ENCODE measurements at regions of chr15 and their contacts with region 1.

Region 1: DNA sequence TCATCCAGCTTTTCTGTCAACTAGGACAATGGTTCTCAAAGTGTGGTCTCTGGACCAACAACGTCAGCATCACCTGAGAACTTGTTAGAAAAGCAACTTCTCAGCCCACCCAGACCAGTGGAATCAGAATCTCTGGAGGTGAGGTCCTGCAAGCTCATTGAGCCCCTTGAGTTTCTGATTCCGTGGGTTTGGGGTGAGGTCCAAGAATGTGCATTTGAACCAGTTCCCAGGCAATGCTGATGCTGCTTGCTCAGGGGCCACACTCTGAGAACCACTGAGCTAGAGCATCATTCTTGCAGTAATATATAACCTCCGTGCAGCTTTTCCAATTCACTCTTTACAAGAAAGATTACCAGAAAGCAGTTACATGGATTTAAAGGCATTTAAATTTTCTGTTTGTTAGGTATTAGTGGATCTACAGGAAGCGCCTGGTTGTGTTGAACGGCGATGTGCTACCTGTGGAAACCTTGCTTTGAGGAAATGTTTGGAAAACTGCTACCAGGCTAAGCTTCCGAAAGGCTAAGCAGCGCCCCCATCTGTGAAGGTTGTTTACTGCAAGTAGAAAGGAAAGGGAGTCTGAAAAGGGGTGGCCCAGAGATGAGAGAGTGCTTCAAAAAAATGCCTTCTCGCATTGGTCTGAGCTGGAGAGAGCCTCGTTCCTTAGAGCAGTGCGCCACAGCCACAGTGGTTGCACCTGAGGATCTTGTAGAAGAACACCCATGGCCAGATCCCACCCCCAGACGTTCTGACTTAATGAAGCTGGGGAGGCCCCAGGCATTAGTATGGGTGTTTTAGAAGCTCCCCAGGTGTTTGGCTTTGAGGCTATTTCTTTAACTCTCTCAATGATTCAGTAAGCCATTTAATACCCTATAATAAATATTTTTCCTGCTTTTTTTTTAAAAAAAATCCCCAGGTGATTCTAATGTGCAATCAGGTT is 50.0 kb downstream of the RLBP1 start:
- H3K4me3 ChIP-seq: no peak overlapping the region
- H3K27ac ChIP-seq: no peak overlapping the region
- H3K4me1 ChIP-seq: peaks cover 23% of the 10 kb centered on the region
- CTCF ChIP-seq: 0 out of 2 replicates have a peak, but pooled peaks have one; percentile 24

Region 2: GRCh38 chr15:88878720-88879184 is 292.7 kb before region 1 on chr15:
- CTCF ChIA-PET with region 1: interaction called, 12 read pairs
- POLR2A ChIA-PET with region 1: no interaction called
- H3K4me3 ChIP-seq: no peak overlapping the region
- H3K27ac ChIP-seq: no peak overlapping the region
- H3K4me1 ChIP-seq: no peaks in the 10 kb centered on the region
- CTCF ChIP-seq: peak; percentile 91

Region 3: GRCh38 chr15:89087830-89088604 is 83.4 kb before region 1 on chr15 and contains the start of gene ABHD2:
- CTCF ChIA-PET with region 1: interaction called, 21 read pairs
- POLR2A ChIA-PET with region 1: interaction called, 4 read pairs
- H3K4me3 ChIP-seq: peak within 1 kb of the TSS; percentile 90
- H3K27ac ChIP-seq: peak within 1 kb of the TSS; percentile 55; the same call in 1 of the 2 replicates
- H3K4me1 ChIP-seq: peaks cover 28% of the 10 kb centered on the region
- CTCF ChIP-seq: no peak

Region 4: GRCh38 chr15:89129123-89129815 is 42.1 kb before region 1 on chr15:
- CTCF ChIA-PET with region 1: interaction called, 87 read pairs
- POLR2A ChIA-PET with region 1: no interaction called
- H3K4me3 ChIP-seq: no peak overlapping the region
- H3K27ac ChIP-seq: no peak overlapping the region
- H3K4me1 ChIP-seq: no peaks in the 10 kb centered on the region
- CTCF ChIP-seq: peak; percentile 18; the same call in 1 of the 2 replicates

Region 5: DNA sequence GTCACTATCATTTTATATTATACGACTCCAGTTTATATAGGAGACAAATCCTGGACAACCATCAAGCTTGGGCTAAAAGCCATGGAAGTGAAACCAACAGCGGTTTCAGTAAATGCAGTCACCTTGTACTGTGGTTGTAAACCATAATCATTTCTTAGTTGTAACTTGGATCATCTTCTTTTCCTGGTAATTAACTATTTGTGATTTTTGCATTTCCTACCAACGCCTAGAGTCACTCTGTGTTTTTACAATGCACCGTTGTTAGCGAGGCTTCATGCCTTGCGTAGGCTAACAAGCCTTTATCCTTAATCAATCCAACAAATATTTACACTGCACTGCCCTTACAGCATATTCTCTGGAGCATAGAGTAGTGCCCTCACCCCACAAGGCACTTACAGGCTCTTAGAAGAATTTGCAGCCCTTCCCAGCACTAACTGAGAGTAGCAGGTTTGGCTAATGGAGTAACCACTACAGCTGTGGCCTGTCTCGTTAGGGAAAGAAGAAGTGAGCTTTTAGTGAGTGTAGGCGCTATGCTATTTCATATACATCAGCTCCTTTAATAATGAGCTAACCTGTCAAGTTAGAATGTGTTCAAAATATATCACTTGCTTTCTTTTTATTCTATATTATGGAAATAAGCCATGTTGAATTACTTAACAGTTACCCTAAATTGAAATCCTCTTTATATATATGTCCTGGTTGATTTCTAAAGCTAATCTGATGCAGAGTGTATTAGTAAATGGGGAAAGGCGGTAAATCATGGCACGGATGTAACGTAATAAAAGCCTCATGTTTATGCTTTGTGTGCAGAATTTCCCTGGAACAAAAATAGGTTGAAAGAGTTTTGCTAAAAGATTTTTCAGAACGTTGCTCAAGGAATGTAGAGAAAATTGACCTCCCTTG is 20.4 kb before region 1 on chr15:
- CTCF ChIA-PET with region 1: interaction called, 13 read pairs
- POLR2A ChIA-PET with region 1: no interaction called
- H3K4me3 ChIP-seq: no peak overlapping the region
- H3K27ac ChIP-seq: no peak overlapping the region
- H3K4me1 ChIP-seq: no peaks in the 10 kb centered on the region; the same call in 1 of the 2 replicates
- CTCF ChIP-seq: no peak

Measured in HEK293 (cell line).